Heart left ventricle (tissue), 16 donors: ENCODE measurements at regions of chr1 and their contacts with region 1.

Region 1: GRCh38 chr1:91511386-91511785 is 10.7 kb downstream of the CDC7 start:
- DNase-seq: no peak
- ATAC-seq: peak in 1 of 4 donors; percentile 58
- H3K4me3 ChIP-seq: no peak overlapping the region
- H3K27ac ChIP-seq: no peak overlapping the region
- H3K4me1 ChIP-seq: no peaks in the 10 kb centered on the region
- H3K27me3 ChIP-seq: no peaks in the 10 kb centered on the region
- CTCF ChIP-seq: peak; percentile 53 to 78 (median 60)
- POLR2A ChIP-seq: no peak

Region 2: GRCh38 chr1:91325461-91325860 is 185.9 kb before region 1 on chr1:
- intact Hi-C with region 1: no loop called
- DNase-seq: no peak
- ATAC-seq: no peak
- H3K4me3 ChIP-seq: no peak overlapping the region
- H3K27ac ChIP-seq: no peak overlapping the region
- H3K4me1 ChIP-seq: no peaks in the 10 kb centered on the region
- H3K27me3 ChIP-seq: no peaks in the 10 kb centered on the region
- CTCF ChIP-seq: no peak
- POLR2A ChIP-seq: no peak

Region 3: DNA sequence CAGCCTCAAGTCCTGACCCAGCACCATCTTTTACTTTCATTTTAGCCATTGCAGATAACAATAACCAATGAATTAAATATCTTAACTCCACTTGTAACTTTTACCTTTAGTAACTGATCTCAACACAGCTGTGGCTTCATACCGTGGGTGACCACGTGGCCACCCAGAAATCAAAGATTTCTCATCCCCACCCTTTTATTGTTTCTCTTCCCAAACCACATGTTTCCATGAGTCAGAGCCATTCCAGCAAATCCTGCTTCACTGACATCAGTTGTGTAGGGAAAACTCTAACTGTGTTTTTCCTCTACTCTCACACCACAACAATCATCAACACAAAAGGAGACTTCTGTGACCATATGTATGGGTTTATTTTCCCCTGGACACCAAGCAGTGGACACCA is 412.8 kb after region 1 on chr1:
- intact Hi-C with region 1: loop called (anchors 1 to 5 kb)
- DNase-seq: no peak
- ATAC-seq: peak in 2 of 4 donors; percentile 33 to 56
- H3K4me3 ChIP-seq: no peak overlapping the region
- H3K27ac ChIP-seq: no peak overlapping the region
- H3K4me1 ChIP-seq: peaks cover 0 to 3% (median 0%) of the 10 kb centered on the region in 12 donors
- H3K27me3 ChIP-seq: no peaks in the 10 kb centered on the region
- CTCF ChIP-seq: no peak
- POLR2A ChIP-seq: no peak

Region 4: DNA sequence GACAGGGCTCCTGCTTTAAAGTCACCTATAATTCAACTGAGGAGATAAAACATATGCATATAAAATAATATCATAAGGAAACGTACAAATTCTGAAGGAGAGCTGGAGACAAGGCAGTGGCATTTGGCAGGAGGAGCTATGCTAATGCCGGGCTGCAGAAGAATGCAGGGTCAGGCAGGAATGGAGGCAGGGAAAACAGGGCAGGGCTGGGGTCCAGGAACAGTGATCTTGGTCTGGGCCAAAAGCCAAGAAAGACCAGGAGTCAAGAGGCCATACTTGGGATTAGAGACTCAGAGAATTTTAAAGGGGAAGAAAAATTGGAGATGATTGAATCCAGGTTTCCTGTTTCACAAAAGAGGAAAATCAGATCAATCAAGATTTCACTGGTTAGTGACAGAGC is 417.9 kb after region 1 on chr1:
- intact Hi-C with region 1: loop called (anchors 1 to 5 kb)
- DNase-seq: no peak
- ATAC-seq: peak in 2 of 4 donors; percentile 30 to 58
- H3K4me3 ChIP-seq: no peak overlapping the region
- H3K27ac ChIP-seq: no peak overlapping the region
- H3K4me1 ChIP-seq: peaks cover 0 to 7% (median 0%) of the 10 kb centered on the region in 12 donors
- H3K27me3 ChIP-seq: no peaks in the 10 kb centered on the region
- CTCF ChIP-seq: no peak
- POLR2A ChIP-seq: no peak

Region 5: GRCh38 chr1:92291372-92291999 is 780.1 kb after region 1 on chr1:
- intact Hi-C with region 1: loop called (anchors 5 to 10 kb)
- DNase-seq: no peak
- ATAC-seq: peak in 2 of 4 donors; percentile 54 to 65
- H3K4me3 ChIP-seq: no peak overlapping the region
- H3K27ac ChIP-seq: no peak overlapping the region
- H3K4me1 ChIP-seq: no peaks in the 10 kb centered on the region
- H3K27me3 ChIP-seq: no peaks in the 10 kb centered on the region
- CTCF ChIP-seq: peak; percentile 40 to 70 (median 57)
- POLR2A ChIP-seq: no peak

Region 6: DNA sequence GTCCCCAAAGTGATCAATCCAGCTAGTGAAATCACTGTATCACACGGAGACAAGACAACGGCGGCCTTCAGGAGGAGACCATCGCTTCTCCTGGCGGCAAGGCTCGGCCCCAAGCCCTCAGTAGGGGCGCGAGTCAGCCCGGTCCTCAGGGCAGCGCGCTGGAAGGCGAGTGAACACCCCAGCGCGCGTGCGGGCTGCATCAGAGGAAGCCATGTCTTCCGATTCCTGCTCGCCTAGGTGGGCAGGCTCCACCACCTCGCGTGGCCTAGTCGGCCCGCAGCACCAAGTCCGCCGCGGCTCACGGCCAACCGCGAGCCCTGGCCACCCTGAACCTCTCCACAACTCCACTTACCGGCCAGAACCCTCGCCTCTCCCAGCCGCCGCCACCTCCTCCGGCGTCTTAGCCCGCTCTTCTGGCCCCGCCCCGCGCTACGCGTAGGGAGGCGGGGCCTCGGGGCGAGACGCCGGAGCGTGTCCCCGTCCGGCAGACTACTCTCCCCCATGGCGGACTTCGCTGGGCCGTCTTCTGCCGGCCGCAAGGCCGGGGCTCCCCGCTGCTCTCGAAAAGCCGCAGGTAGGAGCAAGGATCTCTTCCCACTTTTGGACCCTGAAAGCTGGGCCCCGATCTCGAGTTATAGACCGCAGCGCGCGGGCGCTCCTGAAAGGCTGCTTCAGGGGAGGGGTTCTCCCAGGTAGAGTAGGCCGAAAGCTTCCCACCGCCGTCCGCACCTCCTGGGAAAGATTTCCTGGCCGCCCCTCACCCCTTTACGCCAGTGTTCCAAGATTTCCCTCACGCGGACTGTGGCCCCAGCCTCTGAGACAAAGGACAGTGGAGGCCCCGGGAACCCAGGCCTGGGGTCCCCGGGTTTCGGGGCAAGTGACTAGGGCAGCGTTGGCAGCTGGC is 787.4 kb after region 1 on chr1 and contains the starts of genes GLMN and RPAP2:
- intact Hi-C with region 1: loop called (anchors 5 to 10 kb)
- DNase-seq: peak; percentile 79 to 91 (median 85)
- ATAC-seq: peak; percentile 98 to 100 (median 100)
- H3K4me3 ChIP-seq: peak within 1 kb of the TSS; percentile 59 to 97 (median 86)
- H3K27ac ChIP-seq: peak within 1 kb of the TSS; percentile 85 to 95 (median 92)
- H3K4me1 ChIP-seq: peaks cover 0 to 23% (median 13%) of the 10 kb centered on the region in 12 donors
- H3K27me3 ChIP-seq: no peaks in the 10 kb centered on the region
- CTCF ChIP-seq: peak in 5 of 12 donors; percentile 5 to 36 (median 12)
- POLR2A ChIP-seq: peak; percentile 76 to 92
- total RNA-seq, gene GLMN: 3.0 to 7.2 (median 5.6) TPM
- total RNA-seq, gene RPAP2: 6.7 to 27.7 (median 23.3) TPM